Gastrocnemius medialis (tissue), 4 donors: ENCODE measurements at regions of chr17 and their contacts with region 1.

Region 1: DNA sequence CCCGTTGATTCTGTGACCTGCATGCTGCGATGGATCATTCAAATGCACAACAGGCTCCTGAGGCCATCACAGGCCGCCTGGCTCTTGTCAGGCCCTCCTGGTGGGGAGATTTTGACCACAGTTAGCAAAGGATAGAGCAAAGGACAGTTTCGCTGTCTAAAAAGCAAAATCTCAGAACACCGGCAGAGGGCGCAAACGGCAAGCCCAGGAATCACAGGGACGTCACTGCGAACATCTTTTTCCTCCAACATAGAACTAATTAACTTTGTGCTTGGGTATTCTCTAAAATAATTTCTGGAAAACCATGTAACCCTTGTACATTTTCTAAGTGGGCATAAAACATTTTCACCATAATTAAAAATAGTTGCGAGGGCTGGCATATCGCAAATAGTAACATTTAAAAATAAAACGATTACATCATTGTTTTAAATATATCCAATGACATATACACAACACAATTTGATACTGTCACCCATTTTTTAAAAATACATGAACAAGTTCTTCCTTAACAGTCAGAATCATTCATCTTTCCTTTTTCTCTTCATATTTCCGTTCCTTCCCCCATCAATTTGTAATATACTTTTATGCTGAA is 19.7 kb upstream of the SLC47A1 start:
- DNase-seq: peak in 1 of 2 donors; percentile 65
- ATAC-seq: peak; percentile 88 to 94
- H3K4me3 ChIP-seq: peak overlapping the region in 2 of 4 donors; percentile 19 to 24
- H3K27ac ChIP-seq: peak overlapping the region; percentile 46 to 76 (median 62)
- H3K4me1 ChIP-seq: peaks cover 3 to 5% of the 10 kb centered on the region in 2 donors
- H3K27me3 ChIP-seq: no peaks in the 10 kb centered on the region
- CTCF ChIP-seq: peak; percentile 90 to 94 (median 93)
- POLR2A ChIP-seq: no peak

Region 2: DNA sequence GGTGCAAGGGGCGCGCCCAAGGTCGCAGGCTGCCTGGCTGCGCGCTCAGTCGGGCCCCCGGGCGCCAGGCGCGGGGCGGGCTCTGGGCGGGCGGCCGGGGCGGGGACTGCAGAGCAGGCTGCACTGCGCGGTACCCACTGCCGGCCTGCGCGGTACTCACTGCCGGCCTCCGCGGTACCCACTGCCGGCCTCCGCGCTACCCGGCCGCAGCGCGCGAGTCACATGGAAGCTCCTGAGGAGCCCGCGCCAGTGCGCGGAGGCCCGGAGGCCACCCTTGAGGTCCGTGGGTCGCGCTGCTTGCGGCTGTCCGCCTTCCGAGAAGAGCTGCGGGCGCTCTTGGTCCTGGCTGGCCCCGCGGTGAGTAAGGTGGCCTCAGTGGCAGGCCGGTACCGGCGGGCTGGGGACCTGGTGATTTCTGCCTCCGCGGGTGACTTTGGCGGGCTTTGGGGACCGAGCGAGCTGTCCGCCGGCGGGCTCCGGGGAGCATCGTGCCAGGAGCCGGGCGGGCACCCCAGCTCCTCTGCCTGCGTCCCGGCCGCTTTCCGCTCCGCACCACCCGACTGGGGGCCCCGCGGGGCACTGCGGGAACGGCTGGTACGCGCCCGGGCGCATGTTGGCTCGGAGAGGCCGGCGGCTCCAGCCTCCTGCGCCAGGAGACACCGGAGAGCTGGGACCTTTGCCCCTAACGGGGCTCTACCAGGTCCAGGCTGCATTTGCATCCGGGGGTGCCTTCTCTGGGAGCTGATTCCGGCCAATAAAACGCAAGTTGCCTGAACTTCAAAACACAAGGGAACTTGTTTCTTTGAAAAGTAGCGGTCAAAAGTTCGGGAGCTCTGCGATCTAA is 19.9 kb after region 1 on chr17 and contains the start of gene SLC47A1:
- in situ Hi-C with region 1: no loop called
- intact Hi-C with region 1: loop called (anchors 2 kb)
- DNase-seq: peak in 1 of 2 donors; percentile 56
- ATAC-seq: peak; percentile 44 to 48
- H3K4me3 ChIP-seq: peak within 1 kb of the TSS; percentile 72 to 89 (median 80)
- H3K27ac ChIP-seq: peak within 1 kb of the TSS; percentile 89 to 94 (median 91)
- H3K4me1 ChIP-seq: peaks cover 42 to 43% of the 10 kb centered on the region in 2 donors
- H3K27me3 ChIP-seq: no peaks in the 10 kb centered on the region
- CTCF ChIP-seq: no peak
- POLR2A ChIP-seq: peak; percentile 62 to 67
- total RNA-seq, gene SLC47A1: 34.2 to 257 (median 133) TPM

Region 3: DNA sequence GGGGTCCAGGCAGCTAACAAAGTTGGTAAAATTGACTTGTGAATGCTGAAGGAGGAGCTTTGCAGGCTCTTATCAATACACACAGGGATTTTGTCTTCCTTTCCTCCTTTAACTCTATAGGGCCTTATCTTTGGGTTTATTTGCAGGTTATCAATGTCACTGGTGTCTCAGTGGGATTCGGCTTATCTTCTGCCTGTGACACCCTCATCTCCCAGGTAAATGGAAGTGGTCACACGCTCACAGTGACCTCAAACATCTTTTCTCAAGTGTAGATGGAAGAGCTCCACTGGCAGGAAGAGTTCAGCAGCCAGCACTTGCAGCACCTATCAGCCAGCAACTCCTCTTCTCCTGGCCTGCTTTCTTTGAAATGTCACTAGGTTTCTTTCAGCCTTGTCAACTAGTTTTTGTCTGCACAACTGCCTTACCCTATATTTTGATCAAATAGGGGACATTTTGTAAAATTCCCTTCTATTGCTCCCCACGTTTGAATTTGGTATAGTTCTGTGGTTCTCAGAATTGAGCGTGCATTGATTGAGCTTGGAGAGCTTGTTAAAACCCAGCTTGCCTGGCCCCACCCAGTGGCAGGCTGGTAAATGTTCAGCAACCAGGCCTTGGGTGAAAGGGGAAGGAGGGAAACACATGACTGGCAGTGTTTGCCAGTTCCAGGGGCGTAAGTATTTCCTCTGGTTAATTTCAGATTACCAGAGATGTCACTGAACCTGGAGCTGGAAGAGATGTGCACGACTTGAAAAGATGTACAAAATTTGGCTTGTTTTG is 32.5 kb after region 1 on chr17:
- in situ Hi-C with region 1: no loop called
- intact Hi-C with region 1: loop called (anchors 1 kb)
- DNase-seq: peak in 1 of 2 donors; percentile 50
- ATAC-seq: peak in 1 of 2 donors; percentile 60
- H3K4me3 ChIP-seq: no peak overlapping the region
- H3K27ac ChIP-seq: peak overlapping the region in 3 of 4 donors; percentile 11 to 49 (median 19)
- H3K4me1 ChIP-seq: peaks cover 0 to 5% of the 10 kb centered on the region in 2 donors
- H3K27me3 ChIP-seq: no peaks in the 10 kb centered on the region
- CTCF ChIP-seq: peak in 4 of 5 experiments; percentile 24 to 43 (median 35)
- POLR2A ChIP-seq: no peak

Region 4: DNA sequence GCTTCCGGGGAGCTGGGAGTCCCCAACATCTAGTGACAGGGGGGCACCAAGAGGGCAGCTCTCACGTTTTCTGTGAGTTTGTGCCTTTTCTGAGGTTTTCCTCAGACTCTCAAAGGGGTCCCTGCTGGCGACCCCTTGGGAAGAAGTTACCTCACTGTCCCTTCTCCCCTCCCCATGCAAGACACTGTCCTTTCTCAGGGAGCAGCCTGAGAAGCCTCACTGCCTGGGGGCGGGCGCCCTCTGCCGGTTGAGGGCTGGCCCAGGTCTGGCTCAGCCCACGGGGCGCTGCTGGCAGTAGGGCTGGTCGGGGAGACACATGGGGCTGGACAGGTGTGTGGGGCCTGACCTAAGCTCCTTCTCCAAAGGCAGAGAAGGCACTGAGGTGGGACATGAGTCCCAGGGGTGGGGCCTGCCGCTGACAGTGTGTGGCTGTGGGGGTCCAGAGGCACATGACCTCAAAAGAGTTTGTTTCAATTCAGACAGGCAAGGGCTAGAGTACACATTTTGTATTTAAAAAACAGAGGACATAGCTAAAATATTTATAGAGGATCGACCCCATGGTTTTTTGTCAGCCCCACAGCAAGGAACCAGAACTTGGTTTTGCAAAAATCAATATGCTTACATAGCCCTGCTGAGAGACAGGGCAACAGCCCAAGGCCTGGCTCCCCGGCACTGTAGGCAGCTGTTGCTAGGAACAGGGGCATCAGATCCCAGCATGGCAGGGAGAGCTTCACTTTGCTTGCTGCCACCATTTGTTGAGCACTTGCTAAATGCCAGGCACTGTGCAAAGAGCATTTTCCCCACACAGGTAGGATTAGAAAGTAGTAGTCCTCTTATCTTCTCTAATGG is 252.7 kb after region 1 on chr17:
- in situ Hi-C with region 1: loop called (anchors 5 kb)
- intact Hi-C with region 1: loop called (anchors 1 kb)
- DNase-seq: peak; percentile 44 to 70
- ATAC-seq: peak; percentile 93 to 94
- H3K4me3 ChIP-seq: no peak overlapping the region
- H3K27ac ChIP-seq: no peak overlapping the region
- H3K4me1 ChIP-seq: no peaks in the 10 kb centered on the region
- H3K27me3 ChIP-seq: no peaks in the 10 kb centered on the region
- CTCF ChIP-seq: peak; percentile 87 to 99 (median 94)
- POLR2A ChIP-seq: no peak